Activated CD8-positive, alpha-beta T cell treated with anti-CD3 and anti-CD28 coated beads for 36 hours (primary cell): ENCODE measurements at regions of chr9 and their contacts with region 1.

Region 1: GRCh38 chr9:2979893-2980610 is 136.2 kb upstream of the PUM3 start:
- DNase-seq: no peak
- ATAC-seq: no peak
- H3K4me3 Mint-ChIP-seq: no peak overlapping the region
- H3K27ac Mint-ChIP-seq: no peak overlapping the region
- H3K4me1 Mint-ChIP-seq: no peaks in the 10 kb centered on the region
- H3K27me3 Mint-ChIP-seq: no peaks in the 10 kb centered on the region
- CTCF ChIP-seq: no peak

Region 2: GRCh38 chr9:3012842-3013241 is 32.8 kb after region 1 on chr9:
- CTCF ChIA-PET with region 1: no interaction called
- POLR2A ChIA-PET with region 1: no interaction called
- intact Hi-C with region 1: loop called (anchors 5 kb)
- DNase-seq: no peak
- ATAC-seq: no peak
- H3K4me3 Mint-ChIP-seq: no peak overlapping the region
- H3K27ac Mint-ChIP-seq: no peak overlapping the region
- H3K4me1 Mint-ChIP-seq: no peaks in the 10 kb centered on the region
- H3K27me3 Mint-ChIP-seq: no peaks in the 10 kb centered on the region
- CTCF ChIP-seq: no peak